ENCODE measurements at regions of chr9 and their contacts with region 1.

Region 1: GRCh38 chr9:121557581-121558447 is 58.2 kb upstream of the GGTA1 start:
- DNase-seq: peak; percentile 59 to 86
- ATAC-seq: peak; percentile 76 to 93 (median 86)
- H3K4me3 ChIP-seq: no peak overlapping the region
- H3K27ac ChIP-seq: peak overlapping the region; percentile 4 to 90 (median 74)
- H3K4me1 ChIP-seq: peaks cover 12 to 44% (median 29%) of the 10 kb centered on the region in 9 donors
- H3K27me3 ChIP-seq: no peaks in the 10 kb centered on the region
- CTCF ChIP-seq: no peak

Region 2: GRCh38 chr9:121598965-121599871 is 41.4 kb after region 1 on chr9:
- intact Hi-C with region 1: loop called in 6 of 10 experiments (anchors 5 kb)
- DNase-seq: peak; percentile 78 to 82
- ATAC-seq: peak; percentile 77 to 89 (median 86)
- H3K4me3 ChIP-seq: peak overlapping the region; percentile 66 to 90 (median 76)
- H3K27ac ChIP-seq: peak overlapping the region; percentile 84 to 96 (median 90)
- H3K4me1 ChIP-seq: peaks cover 6 to 67% (median 39%) of the 10 kb centered on the region in 9 donors
- H3K27me3 ChIP-seq: peaks cover 0 to 43% (median 0%) of the 10 kb centered on the region in 7 donors
- CTCF ChIP-seq: no peak

Region 3: GRCh38 chr9:121604242-121604641 is 46.4 kb after region 1 on chr9:
- intact Hi-C with region 1: loop called in 7 of 10 experiments (anchors 5 kb)
- DNase-seq: peak in 1 of 2 donors; percentile 43
- ATAC-seq: peak in 4 of 8 donors; percentile 13 to 26 (median 20)
- H3K4me3 ChIP-seq: no peak overlapping the region
- H3K27ac ChIP-seq: peak overlapping the region in 8 of 10 donors; percentile 36 to 93 (median 67)
- H3K4me1 ChIP-seq: peaks cover 25 to 96% (median 80%) of the 10 kb centered on the region in 9 donors
- H3K27me3 ChIP-seq: peaks cover 0 to 22% (median 0%) of the 10 kb centered on the region in 7 donors
- CTCF ChIP-seq: peak in 1 of 9 donors; percentile 8

Region 4: GRCh38 chr9:121609845-121610570 is 52.2 kb after region 1 on chr9:
- intact Hi-C with region 1: loop called in 2 of 10 experiments (anchors 5 kb)
- DNase-seq: peak; percentile 54 to 57
- ATAC-seq: peak; percentile 16 to 75 (median 48)
- H3K4me3 ChIP-seq: no peak overlapping the region
- H3K27ac ChIP-seq: peak overlapping the region in 9 of 10 donors; percentile 59 to 93 (median 83)
- H3K4me1 ChIP-seq: peaks cover 30 to 94% (median 84%) of the 10 kb centered on the region in 9 donors
- H3K27me3 ChIP-seq: peaks cover 0 to 5% (median 0%) of the 10 kb centered on the region in 7 donors
- CTCF ChIP-seq: peak in 1 of 9 donors; percentile 16